ENCODE measurements at regions of chrX and their contacts with region 1.

Region 1: GRCh38 chrX:104565791-104566680 is at the start of gene IL1RAPL2:
- DNase-seq: no peak
- ATAC-seq: no peak
- total RNA-seq, gene IL1RAPL2: not detected

Region 2: DNA sequence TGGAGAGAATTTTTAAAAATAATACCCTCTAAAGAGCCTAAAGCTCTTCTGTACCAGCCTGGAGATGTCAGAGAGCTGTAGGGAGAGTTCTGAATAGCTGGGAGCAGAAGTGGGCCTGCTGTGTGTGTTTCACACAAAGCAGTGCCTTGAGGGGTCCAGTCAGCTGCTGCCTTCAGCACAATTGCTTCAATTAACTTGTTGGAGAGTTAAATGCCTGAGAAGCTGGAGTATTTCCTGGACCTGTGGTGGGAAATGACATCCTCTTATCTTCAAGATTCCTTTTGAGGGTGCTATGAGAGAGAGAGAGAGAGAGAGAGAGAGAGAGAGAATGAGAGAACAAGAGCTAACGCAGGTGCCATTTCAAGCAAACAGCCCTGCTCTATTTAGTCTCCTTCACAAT is 96.3 kb before region 1 on chrX:
- intact Hi-C with region 1: no loop called
- DNase-seq: no peak
- ATAC-seq: no peak

Region 3: DNA sequence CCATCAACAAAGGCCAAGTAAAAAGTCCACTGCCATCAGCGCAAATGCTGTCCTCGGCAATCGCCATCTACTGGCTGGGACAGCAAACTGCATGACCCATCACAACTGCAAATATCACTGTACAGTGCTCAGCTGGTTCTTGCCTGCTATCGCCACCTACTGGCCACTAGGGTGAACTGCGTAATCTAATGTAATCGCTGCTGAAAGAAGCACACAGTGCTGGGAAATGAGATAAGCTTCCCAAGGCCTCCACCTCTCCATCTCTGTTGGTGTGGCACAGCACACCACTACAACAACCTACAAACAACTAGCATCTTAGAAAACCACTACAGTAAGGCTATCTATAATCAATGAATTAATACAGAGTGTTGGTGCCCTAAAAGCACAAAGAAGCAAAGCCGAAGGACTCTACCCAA is 356.2 kb after region 1 on chrX:
- intact Hi-C with region 1: loop called (anchors 10 kb)
- DNase-seq: no peak
- ATAC-seq: peak; percentile 46